ENCODE measurements at regions of chr10 and their contacts with region 1.

Region 1: GRCh38 chr10:88114368-88114767 is 250.9 kb downstream of the PTEN start:
- DNase-seq: peak; percentile 40 to 81 (median 58)
- H3K4me3 ChIP-seq: no peak overlapping the region
- H3K27ac ChIP-seq: no peak overlapping the region
- H3K4me1 ChIP-seq: peaks cover 0 to 3% of the 10 kb centered on the region in 2 donors
- H3K27me3 ChIP-seq: no peaks in the 10 kb centered on the region
- CTCF ChIP-seq: peak; percentile 28 to 70 (median 56)
- POLR2A ChIP-seq: no peak

Region 2: DNA sequence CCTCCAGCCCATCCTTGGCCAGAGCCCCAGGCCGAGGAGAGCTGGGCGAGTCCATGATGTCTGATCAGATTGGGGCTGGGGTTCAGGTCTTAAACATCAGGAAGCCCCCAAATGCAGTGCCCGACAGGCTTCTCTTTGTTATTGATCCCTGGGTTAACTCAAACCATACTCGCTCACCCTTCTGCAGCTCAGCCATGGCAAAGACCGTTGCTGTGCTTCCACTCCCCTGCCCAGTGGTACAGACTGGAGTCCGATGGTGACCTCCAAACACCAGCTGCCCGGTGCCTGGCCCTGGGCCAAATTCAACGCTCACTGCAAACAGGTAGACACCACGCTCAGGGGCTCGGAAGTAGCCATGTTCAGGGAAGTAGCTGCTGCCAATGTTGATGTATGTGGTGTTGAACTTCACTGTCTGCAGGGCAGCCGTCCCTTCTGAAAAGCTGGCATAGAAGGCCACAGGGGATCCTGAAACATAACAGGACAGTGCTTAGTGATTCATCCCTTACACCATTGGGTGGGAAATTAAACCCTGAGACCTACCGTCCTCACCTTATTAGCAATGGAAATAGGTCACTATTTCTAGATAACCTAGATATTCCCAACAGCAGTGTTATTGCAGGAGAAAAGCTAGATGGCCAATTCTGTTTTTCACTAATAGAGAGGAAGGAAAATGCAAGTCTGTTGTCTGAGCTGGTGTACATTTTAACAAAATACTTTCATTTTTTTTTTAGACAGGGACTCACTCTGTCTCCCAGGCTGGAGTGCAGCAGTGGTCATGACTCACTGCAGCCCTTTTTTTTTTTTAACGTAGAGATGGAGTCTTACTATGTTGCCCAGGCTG is 1177.5 kb before region 1 on chr10:
- intact Hi-C with region 1: no loop called
- DNase-seq: peak in 5 of 7 donors; percentile 44 to 63 (median 58)
- H3K4me3 ChIP-seq: peak overlapping the region in 1 of 4 donors; percentile 13
- H3K27ac ChIP-seq: peak overlapping the region in 3 of 5 donors; percentile 55 to 65 (median 64)
- H3K4me1 ChIP-seq: peaks cover 7 to 17% of the 10 kb centered on the region in 2 donors
- H3K27me3 ChIP-seq: no peaks in the 10 kb centered on the region
- CTCF ChIP-seq: no peak
- POLR2A ChIP-seq: no peak

Region 3: DNA sequence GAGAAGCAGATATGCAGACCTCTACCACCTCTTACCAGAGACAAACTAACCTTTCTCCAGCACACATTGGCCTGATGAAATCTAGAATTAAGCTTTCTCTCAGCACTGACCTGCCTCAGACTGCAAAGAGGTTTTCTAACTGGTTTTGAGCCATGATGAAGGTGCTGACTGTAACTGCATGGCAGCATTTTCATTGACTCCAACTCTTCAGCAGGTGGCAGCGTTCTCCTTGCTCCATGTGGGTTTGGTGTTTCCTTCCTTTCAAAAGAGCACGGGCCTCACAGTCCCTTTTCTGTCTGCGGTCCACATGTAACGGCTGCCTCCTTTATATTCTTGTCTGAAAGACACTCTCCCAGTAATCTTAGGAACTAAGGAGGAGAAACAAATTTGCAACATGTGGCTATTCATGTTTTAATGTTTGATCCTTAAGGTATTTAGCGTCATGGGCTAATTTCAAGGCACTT is 263.6 kb before region 1 on chr10:
- intact Hi-C with region 1: loop called in 1 of 2 experiments (anchors 5 kb)
- DNase-seq: peak; percentile 55 to 87 (median 76)
- H3K4me3 ChIP-seq: no peak overlapping the region
- H3K27ac ChIP-seq: no peak overlapping the region
- H3K4me1 ChIP-seq: no peaks in the 10 kb centered on the region
- H3K27me3 ChIP-seq: no peaks in the 10 kb centered on the region
- CTCF ChIP-seq: peak; percentile 44 to 76 (median 70)
- POLR2A ChIP-seq: no peak